Activated naive CD4-positive, alpha-beta T cell treated with anti-CD3 and anti-CD28 coated beads for 36 hours (primary cell): ENCODE measurements at regions of chr1 and their contacts with region 1.

Region 1: DNA sequence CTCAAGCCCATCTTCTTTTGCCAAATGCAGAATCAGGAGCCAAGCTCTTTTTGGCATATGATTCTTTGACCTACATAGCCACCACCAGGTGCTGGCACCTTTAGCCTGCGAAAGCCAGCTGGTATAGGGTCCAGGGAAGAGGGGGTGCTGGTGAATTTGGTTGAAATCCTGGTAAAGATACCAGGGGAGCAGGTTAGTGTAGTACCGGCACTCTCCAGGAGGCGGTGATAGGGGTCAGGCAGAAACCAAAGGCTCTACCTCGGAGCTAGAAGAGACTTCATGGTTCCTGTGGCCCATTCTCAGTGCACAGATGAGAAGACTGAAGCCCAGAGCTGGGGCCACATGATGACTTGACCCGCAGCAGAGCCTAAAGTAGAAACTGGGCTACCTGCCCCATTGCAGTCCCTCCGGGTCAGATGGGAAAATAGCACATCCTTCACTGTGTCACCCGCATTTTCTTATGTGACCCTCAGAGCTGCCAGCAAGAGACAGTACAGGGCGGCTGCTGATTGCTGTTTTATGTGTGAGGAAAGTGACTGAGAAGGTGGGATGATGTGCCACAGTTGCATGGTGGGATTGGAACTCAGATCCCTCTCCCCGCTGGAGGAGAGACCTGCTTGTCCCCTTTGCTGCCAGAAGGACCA is 36.0 kb upstream of the IL19 start:
- DNase-seq: peak; percentile 88
- H3K4me3 Mint-ChIP-seq: no peak overlapping the region
- H3K27ac Mint-ChIP-seq: no peak overlapping the region
- H3K4me1 Mint-ChIP-seq: peaks cover 53% of the 10 kb centered on the region
- H3K27me3 Mint-ChIP-seq: no peaks in the 10 kb centered on the region

Region 2: GRCh38 chr1:205248793-205249601 is 1485.6 kb before region 1 on chr1:
- CTCF ChIA-PET with region 1: no interaction called
- intact Hi-C with region 1: no loop called
- DNase-seq: no peak
- H3K4me3 Mint-ChIP-seq: no peak overlapping the region
- H3K27ac Mint-ChIP-seq: no peak overlapping the region
- H3K4me1 Mint-ChIP-seq: peaks cover 3% of the 10 kb centered on the region
- H3K27me3 Mint-ChIP-seq: no peaks in the 10 kb centered on the region

Region 3: DNA sequence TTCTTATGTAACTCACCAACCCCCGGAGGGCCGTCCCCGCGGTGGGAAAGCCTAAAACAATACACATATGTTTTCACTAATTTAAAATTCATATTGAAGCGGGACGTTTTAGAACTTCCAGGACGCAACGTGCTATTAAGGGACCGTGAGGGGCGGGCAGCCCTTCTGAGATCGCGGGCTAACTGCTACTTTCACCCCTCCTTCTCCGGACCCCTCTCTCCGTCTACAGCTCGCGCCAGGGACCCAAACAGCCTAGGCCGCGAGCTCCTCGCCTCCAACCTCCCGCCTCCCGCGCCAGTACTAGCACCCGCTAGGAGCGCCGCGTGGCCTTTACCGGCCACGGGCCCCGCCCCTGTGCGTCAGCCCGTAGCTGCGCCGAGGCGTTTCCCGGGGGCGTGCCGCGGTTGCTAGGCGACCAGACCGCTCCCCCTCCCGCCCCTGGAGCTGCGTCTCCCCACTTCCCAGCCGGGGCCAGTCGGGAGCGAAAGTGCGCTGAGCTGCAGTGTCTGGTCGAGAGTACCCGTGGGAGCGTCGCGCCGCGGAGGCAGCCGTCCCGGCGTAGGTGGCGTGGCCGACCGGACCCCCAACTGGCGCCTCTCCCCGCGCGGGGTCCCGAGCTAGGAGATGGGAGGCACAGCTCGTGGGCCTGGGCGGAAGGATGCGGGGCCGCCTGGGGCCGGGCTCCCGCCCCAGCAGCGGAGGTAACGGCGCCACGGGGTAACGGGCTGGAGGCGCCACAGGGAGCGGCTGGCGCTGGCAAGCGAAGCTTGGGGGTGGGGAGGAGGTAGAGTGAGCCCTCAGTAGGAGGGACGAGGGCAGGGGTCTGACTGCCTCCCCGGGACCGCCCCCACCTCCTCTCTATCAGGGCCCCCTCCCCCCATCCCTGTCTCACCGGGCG is 99.3 kb before region 1 on chr1 and contains the start of gene DYRK3:
- CTCF ChIA-PET with region 1: no interaction called
- intact Hi-C with region 1: loop called (anchors 2 kb)
- DNase-seq: peak; percentile 93
- H3K4me3 Mint-ChIP-seq: peak within 1 kb of the TSS; percentile 83
- H3K27ac Mint-ChIP-seq: peak within 1 kb of the TSS; percentile 92
- H3K4me1 Mint-ChIP-seq: peaks cover 27% of the 10 kb centered on the region
- H3K27me3 Mint-ChIP-seq: peaks cover 21% of the 10 kb centered on the region
- total RNA-seq, gene DYRK3: 6.5 to 6.7 TPM

Region 4: DNA sequence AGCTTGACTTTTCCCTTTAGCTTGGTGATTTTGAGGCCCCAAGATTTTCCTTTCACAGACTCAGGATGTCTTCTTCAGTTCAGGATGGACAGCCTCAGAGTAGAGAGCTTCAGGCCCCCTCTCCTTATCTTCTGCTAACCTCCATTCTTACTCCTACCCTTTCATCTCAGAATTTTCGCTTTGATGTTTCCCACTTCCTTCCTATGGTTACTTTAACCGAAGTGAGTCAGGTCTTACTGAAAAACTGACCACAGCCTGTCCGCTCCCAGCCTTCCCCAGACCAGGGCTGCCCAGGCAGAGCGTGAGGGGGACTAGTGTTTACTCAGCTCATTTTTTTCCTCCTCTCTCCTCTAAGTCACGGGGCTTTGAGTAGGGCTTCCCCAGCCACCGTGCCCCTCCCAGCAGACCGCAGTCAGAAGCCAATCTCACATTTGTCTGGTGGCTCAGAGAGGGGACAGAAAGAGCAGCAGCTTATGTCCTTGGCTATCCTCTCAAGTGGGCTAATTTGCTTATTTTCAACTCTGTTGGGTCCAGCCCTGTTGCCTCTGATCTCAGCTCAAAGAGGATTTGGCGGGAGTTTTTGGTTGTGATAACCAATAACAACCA is 31.7 kb after region 1 on chr1:
- CTCF ChIA-PET with region 1: interaction called, 29 read pairs
- intact Hi-C with region 1: loop called (anchors 1 kb)
- DNase-seq: peak; percentile 79
- H3K4me3 Mint-ChIP-seq: no peak overlapping the region
- H3K27ac Mint-ChIP-seq: no peak overlapping the region
- H3K4me1 Mint-ChIP-seq: peaks cover 63% of the 10 kb centered on the region
- H3K27me3 Mint-ChIP-seq: peaks cover 7% of the 10 kb centered on the region

Region 5: DNA sequence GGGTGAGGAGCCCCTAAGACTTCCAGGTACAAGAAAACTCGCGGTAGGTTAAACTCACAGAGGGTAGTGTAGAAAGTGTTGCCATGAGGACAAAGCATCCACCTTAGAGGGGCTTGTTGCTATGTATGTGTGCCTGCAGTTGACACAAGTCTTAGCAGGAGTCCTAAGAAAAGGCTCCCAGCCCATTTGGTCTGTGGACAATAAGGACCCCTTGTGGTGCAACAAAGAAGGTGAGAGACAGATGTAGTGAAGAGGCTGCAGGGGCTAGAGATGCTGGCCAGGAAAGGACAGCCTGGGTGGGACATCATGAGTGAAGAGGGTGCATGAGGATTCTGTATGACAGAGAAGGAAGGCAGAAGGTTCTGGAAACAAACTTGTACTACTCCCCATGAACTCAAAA is 74.0 kb after region 1 on chr1:
- CTCF ChIA-PET with region 1: interaction called, 232 read pairs
- intact Hi-C with region 1: loop called (anchors 1 kb)
- DNase-seq: peak; percentile 70
- H3K4me3 Mint-ChIP-seq: no peak overlapping the region
- H3K27ac Mint-ChIP-seq: no peak overlapping the region
- H3K4me1 Mint-ChIP-seq: peaks cover 42% of the 10 kb centered on the region
- H3K27me3 Mint-ChIP-seq: no peaks in the 10 kb centered on the region

Region 6: DNA sequence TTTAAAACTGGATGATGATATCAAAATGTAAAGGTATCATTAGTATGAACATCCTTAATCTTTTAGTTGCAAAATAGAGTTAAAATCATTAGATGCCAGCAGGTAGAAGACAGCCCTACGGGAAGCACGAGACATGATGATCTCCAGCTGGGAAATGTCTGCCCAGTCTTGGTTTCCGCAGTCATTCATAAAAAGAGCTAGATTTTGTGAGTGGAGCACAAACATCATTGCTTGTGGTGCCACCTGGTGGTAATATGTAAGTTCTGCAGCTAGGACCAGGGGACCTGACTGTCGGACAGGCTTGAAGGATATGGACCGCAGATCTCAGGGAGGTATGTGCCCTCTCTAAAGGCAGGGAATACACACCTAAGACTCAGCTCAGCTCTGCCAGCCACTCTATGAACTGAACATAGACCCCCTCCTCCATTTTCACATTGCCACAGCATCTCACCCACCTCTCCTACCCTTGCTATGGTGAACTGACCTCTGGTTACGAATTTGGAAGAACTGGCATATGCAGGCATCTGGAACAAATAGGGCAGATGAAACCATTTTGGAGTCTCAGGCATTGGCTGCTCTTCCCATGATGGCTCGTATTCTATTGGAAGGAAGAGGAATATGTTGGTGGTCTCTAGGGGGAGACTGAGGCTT is 177.9 kb after region 1 on chr1:
- CTCF ChIA-PET with region 1: interaction called, 100 read pairs
- intact Hi-C with region 1: loop called (anchors 1 kb)
- DNase-seq: peak; percentile 81
- H3K4me3 Mint-ChIP-seq: no peak overlapping the region
- H3K27ac Mint-ChIP-seq: peak overlapping the region; percentile 47
- H3K4me1 Mint-ChIP-seq: peaks cover 84% of the 10 kb centered on the region
- H3K27me3 Mint-ChIP-seq: no peaks in the 10 kb centered on the region

Region 7: GRCh38 chr1:207052911-207053769 is 318.5 kb after region 1 on chr1 and contains the start of gene PFKFB2:
- CTCF ChIA-PET with region 1: no interaction called
- intact Hi-C with region 1: loop called (anchors 5 kb)
- DNase-seq: peak; percentile 97
- H3K4me3 Mint-ChIP-seq: peak within 1 kb of the TSS; percentile 97
- H3K27ac Mint-ChIP-seq: peak within 1 kb of the TSS; percentile 68
- H3K4me1 Mint-ChIP-seq: peaks cover 36% of the 10 kb centered on the region
- H3K27me3 Mint-ChIP-seq: no peaks in the 10 kb centered on the region
- total RNA-seq, gene PFKFB2: 3.4 to 6.2 TPM

Region 8: DNA sequence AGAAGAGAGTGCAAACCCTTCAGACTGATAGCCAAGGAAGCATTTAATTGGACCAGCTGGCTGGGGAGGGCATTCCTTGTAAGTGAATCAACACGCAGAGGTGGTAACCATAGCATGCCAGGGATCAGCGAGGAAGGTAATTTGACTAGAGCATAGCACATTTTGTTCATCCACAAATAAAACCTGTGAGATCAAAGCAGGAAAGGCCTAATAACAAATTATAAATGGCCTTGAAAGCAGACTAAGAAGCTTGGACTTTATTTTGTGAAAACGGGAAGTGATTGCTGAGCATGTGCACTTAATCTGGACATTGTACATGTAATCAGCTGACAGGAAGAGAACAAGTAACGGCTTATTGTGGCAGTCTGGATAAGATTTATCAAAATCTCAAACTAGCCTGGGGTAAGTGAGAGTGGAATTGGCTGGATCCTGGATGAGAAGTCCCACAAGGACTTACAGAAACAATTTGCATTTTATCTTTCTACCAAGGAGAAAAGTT is 575.2 kb after region 1 on chr1:
- CTCF ChIA-PET with region 1: no interaction called
- intact Hi-C with region 1: no loop called
- DNase-seq: peak; percentile 22
- H3K4me3 Mint-ChIP-seq: peak overlapping the region; percentile 56
- H3K27ac Mint-ChIP-seq: peak overlapping the region; percentile 37
- H3K4me1 Mint-ChIP-seq: peaks cover 19% of the 10 kb centered on the region
- H3K27me3 Mint-ChIP-seq: no peaks in the 10 kb centered on the region